ENCODE measurements at regions of chr7 and their contacts with region 1.

Region 1: GRCh38 chr7:143305423-143306070 is 10.4 kb upstream of the CLCN1 start:
- DNase-seq: peak; percentile 26 to 71 (median 55)
- H3K4me3 ChIP-seq: no peak overlapping the region
- H3K27ac ChIP-seq: no peak overlapping the region
- H3K4me1 ChIP-seq: no peaks in the 10 kb centered on the region
- H3K27me3 ChIP-seq: no peaks in the 10 kb centered on the region
- CTCF ChIP-seq: peak in 2 of 3 donors; percentile 17 to 19
- EP300 ChIP-seq: no peak
- POLR2A ChIP-seq: no peak

Region 2: GRCh38 chr7:143240291-143241168 is 65.0 kb before region 1 on chr7:
- intact Hi-C with region 1: loop called in 2 of 4 experiments (anchors 10 kb)
- DNase-seq: peak; percentile 37 to 73 (median 61)
- H3K4me3 ChIP-seq: no peak overlapping the region
- H3K27ac ChIP-seq: no peak overlapping the region
- H3K4me1 ChIP-seq: peaks cover 1% of the 10 kb centered on the region
- H3K27me3 ChIP-seq: no peaks in the 10 kb centered on the region
- CTCF ChIP-seq: peak; percentile 61 to 76 (median 73)
- EP300 ChIP-seq: no peak
- POLR2A ChIP-seq: no peak

Measured in ovary (tissue), 10 donors.